Tibial artery (tissue), 4 donors: ENCODE measurements at regions of chr13 and their contacts with region 1.

Region 1: GRCh38 chr13:35157143-35157755 is 215.2 kb downstream of the NBEA start:
- DNase-seq: no peak
- H3K4me3 ChIP-seq: no peak overlapping the region
- H3K27ac ChIP-seq: no peak overlapping the region
- H3K4me1 ChIP-seq: no peaks in the 10 kb centered on the region
- H3K27me3 ChIP-seq: no peaks in the 10 kb centered on the region
- CTCF ChIP-seq: peak; percentile 66 to 75

Region 2: DNA sequence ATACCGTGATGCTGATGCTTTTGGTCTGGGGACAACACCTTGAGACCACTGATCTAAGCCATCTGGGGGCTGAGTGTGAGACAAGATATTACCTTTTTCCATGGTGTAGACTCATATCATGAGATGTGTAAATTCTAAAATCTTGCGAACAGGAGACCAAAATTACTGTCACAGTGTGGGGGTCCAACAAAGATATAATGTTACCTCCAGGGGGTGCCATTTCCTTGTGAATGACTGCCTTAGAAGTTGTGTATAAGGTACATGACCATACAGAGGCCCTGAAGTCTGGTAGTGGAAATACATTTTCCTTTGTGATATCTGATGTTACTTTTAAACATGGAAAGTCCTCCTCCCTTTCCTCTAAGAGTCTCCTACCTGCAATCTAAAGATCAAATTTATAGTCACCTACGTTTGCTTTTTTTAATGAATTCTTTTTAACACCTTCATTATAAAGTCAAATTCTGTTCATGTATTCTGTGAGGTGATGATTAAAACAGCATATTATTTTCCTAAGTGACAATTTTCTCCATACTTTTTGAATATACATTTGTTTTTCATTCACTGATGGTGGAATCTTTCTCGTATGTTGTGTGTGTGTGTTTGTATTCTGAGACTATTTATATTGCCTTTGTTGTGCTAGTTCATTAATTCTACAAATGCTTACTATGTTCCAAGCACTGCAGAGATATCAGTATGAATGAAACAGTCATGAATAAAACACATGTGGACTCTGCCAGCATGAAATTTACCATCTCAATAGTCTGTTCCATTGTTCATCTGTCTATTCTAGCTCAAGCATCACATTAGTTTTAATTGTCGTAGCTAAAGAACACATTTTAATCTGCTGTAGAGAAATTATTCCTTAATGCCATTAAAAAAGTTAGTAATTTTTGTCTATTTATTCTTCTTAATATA is 1225.6 kb before region 1 on chr13:
- intact Hi-C with region 1: loop called (anchors 5 kb)
- DNase-seq: no peak
- H3K4me3 ChIP-seq: no peak overlapping the region
- H3K27ac ChIP-seq: no peak overlapping the region
- H3K4me1 ChIP-seq: peaks cover 0 to 10% (median 0%) of the 10 kb centered on the region in 4 donors
- H3K27me3 ChIP-seq: no peaks in the 10 kb centered on the region
- CTCF ChIP-seq: peak; percentile 48 to 64